ENCODE measurements at regions of chr2 and their contacts with region 1.

Region 1: GRCh38 chr2:27032495-27033252 is at the start of gene TMEM214:
- DNase-seq: peak; percentile 96
- ATAC-seq: peak; percentile 98
- total RNA-seq, gene TMEM214: 32.7 TPM

Region 2: GRCh38 chr2:26982102-26982742 is 50.5 kb before region 1 on chr2:
- intact Hi-C with region 1: no loop called
- DNase-seq: peak; percentile 75
- ATAC-seq: peak; percentile 81

Region 3: DNA sequence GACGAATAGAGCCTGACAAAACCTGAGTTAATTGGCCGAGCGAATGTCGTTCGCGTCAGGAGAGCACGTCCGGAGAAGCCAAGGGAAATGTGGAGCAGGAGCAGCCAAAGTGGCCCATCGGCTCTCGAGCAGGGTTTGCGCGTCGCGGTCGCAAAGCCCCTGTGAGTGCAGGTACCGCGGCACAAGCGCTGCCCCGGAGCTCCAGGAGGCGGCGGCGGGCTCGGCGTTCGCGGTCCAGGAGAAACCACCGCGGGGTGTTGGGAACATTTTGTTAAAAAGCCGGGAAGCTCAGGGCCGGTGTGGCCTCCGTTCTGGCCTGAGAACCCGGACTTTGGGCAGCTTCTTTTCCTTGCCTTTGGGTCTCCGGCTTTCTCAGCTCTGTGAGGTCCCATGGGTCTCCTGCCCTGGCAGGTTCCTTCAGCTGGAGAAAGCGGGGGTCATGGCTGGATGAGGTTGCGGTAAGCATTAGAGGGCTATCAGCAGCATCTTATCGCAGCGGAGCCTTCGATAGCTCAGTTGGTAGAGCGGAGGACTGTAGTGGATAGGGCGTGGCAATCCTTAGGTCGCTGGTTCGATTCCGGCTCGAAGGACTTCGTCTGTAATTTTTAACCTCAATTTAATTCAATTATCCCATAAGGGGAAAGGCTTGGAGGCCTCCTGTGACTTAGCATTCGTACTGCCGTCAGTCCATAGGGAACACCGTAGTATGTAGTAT is 17.8 kb after region 1 on chr2:
- intact Hi-C with region 1: loop called (anchors 2 kb)
- DNase-seq: peak; percentile 90
- ATAC-seq: peak; percentile 85

Region 4: GRCh38 chr2:27071277-27071989 is 38.8 kb after region 1 on chr2 and contains the start of gene OST4:
- intact Hi-C with region 1: loop called (anchors 5 kb)
- DNase-seq: peak; percentile 98
- ATAC-seq: peak; percentile 96
- total RNA-seq, gene OST4: 411 TPM